SK-N-SH (cell line): ENCODE measurements at regions of chr3 and their contacts with region 1.

Region 1: DNA sequence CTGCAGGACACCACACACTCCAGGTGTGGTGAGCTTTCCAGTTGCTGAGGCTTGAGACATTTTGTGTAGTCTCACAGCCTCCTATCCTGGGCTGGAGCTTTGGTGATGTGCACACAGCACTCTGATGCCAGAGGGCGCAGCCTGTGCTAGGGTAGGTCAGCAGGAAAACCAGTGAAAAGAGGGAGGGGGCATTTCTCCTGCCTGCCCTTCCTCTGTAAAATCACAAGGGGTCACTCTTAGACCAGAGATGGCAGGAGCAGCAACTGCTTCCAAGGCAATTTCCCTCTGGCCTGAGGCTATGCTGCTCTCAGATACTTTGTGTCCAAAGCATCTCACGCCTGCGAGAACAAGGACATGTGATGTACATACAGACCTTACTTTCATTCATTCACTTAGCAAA is 16.5 kb upstream of the MUSTN1 start:
- DNase-seq: peak; percentile 87
- H3K4me3 ChIP-seq: no peak overlapping the region; a peak in 1 of 4 replicates
- H3K27ac ChIP-seq: no peak overlapping the region
- H3K4me1 ChIP-seq: peaks cover 0 to 3% of the 10 kb centered on the region in 2 experiments; a peak in 1 of 4 replicates
- H3K27me3 ChIP-seq: no peaks in the 10 kb centered on the region
- CTCF ChIP-seq: peak; percentile 62
- EP300 ChIP-seq: no peak
- RAD21 ChIP-seq: peak; percentile 96

Region 2: DNA sequence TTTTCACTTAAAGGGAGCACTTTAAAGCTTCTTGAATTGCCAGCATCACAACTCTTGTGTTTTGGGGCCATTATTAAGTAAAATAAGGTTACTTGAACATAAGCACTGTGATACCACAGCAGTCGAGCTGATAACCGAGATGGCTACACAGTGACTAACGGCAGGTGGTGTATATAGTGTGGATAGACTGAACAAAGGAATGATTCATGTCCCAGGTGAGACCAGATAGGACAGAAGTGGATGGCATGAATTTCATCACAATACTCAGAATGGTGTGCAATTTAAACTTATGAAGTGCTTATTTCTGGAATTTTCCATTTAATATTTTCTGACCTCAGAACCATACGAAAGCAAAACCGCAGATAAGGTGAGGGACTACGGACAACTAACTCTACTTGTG is 205.8 kb before region 1 on chr3:
- CTCF ChIA-PET with region 1: no interaction called
- POLR2A ChIA-PET with region 1: no interaction called
- DNase-seq: no peak
- H3K4me3 ChIP-seq: no peak overlapping the region
- H3K27ac ChIP-seq: no peak overlapping the region
- H3K4me1 ChIP-seq: no peaks in the 10 kb centered on the region
- H3K27me3 ChIP-seq: no peaks in the 10 kb centered on the region
- CTCF ChIP-seq: no peak
- EP300 ChIP-seq: no peak
- RAD21 ChIP-seq: no peak

Region 3: DNA sequence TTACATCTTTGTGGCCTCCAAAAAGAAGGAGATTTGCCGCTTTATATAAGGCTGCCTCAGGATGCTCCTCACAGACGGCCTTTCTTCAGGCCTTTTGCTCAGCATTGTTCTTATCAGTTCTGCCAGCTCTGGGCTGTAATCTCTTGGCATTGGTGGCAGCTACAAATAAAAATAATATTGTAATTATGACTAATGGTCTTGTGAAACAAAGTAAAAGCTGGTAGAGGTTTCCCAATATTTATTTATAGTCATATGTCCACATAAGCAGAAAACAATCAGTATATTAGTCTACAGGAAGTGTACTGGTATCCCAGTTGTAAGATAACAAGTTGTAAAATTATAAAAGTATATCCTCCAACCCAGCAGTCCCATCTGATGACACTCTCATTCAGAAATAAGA is 87.9 kb before region 1 on chr3:
- CTCF ChIA-PET with region 1: no interaction called
- POLR2A ChIA-PET with region 1: no interaction called
- DNase-seq: no peak
- H3K4me3 ChIP-seq: no peak overlapping the region
- H3K27ac ChIP-seq: no peak overlapping the region
- H3K4me1 ChIP-seq: no peaks in the 10 kb centered on the region
- H3K27me3 ChIP-seq: no peaks in the 10 kb centered on the region
- CTCF ChIP-seq: no peak
- EP300 ChIP-seq: no peak
- RAD21 ChIP-seq: no peak

Region 4: GRCh38 chr3:52779011-52779836 is 72.1 kb before region 1 on chr3:
- CTCF ChIA-PET with region 1: no interaction called
- POLR2A ChIA-PET with region 1: no interaction called
- DNase-seq: no peak
- H3K4me3 ChIP-seq: no peak overlapping the region
- H3K27ac ChIP-seq: no peak overlapping the region
- H3K4me1 ChIP-seq: peaks cover 0 to 10% of the 10 kb centered on the region in 2 experiments; a peak in 1 of 4 replicates
- H3K27me3 ChIP-seq: peaks cover 13% of the 10 kb centered on the region; the same call in 1 of the 2 replicates
- CTCF ChIP-seq: no peak
- EP300 ChIP-seq: no peak
- RAD21 ChIP-seq: no peak

Region 5: GRCh38 chr3:52838561-52839267 is 12.6 kb before region 1 on chr3:
- CTCF ChIA-PET with region 1: interaction called, 10 read pairs
- POLR2A ChIA-PET with region 1: no interaction called
- DNase-seq: no peak
- H3K4me3 ChIP-seq: no peak overlapping the region
- H3K27ac ChIP-seq: no peak overlapping the region
- H3K4me1 ChIP-seq: no peaks in the 10 kb centered on the region
- H3K27me3 ChIP-seq: no peaks in the 10 kb centered on the region
- CTCF ChIP-seq: no peak
- EP300 ChIP-seq: no peak
- RAD21 ChIP-seq: no peak

Region 6: DNA sequence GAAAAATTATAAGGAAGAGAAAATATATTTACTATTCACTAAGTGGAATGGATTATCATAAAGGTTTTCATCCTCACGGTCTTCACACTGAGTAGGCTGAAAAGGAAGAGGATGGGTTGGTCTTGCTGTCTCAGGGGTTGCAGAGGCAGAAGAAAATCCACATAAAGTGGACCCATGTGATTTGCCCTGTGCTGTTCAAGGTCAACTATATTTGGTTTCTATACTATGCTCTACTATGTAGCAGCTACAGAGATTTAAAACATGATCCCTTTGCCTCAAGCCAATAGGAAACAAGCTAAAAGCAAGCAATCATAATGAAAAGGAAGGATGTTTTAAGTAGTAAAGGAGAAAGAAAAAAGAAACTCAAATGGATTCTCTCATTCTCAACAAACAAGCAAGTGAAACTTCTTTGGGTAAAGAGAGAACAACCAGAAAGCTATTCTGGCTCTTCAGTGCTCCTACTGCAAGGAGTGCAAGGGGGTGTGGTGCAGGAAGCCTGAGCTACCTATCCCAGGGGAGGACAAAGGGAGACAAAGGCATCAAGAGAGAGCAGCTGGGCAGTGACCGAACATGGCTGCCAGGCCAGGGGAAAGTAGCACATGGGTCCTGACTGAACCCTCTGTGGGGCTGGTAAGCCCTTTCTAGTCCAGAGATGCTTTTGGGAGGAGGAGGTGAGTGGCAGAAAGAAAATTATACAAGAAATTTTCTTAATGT is 158.6 kb after region 1 on chr3:
- CTCF ChIA-PET with region 1: no interaction called
- POLR2A ChIA-PET with region 1: no interaction called
- DNase-seq: no peak
- H3K4me3 ChIP-seq: no peak overlapping the region
- H3K27ac ChIP-seq: no peak overlapping the region
- H3K4me1 ChIP-seq: no peaks in the 10 kb centered on the region
- H3K27me3 ChIP-seq: no peaks in the 10 kb centered on the region
- CTCF ChIP-seq: no peak
- EP300 ChIP-seq: no peak
- RAD21 ChIP-seq: no peak

Region 7: GRCh38 chr3:53072653-53073552 is 221.6 kb after region 1 on chr3:
- CTCF ChIA-PET with region 1: interaction called, 73 read pairs
- POLR2A ChIA-PET with region 1: no interaction called
- DNase-seq: peak; percentile 88
- H3K4me3 ChIP-seq: peak overlapping the region in 1 of 2 experiments; percentile 30; a peak in 1 of 4 replicates
- H3K27ac ChIP-seq: no peak overlapping the region; a peak in 1 of 4 replicates
- H3K4me1 ChIP-seq: peaks cover 0 to 26% of the 10 kb centered on the region in 2 experiments; a peak in 1 of 4 replicates
- H3K27me3 ChIP-seq: no peaks in the 10 kb centered on the region
- CTCF ChIP-seq: peak; percentile 87
- EP300 ChIP-seq: no peak
- RAD21 ChIP-seq: peak; percentile 88